Transverse colon (tissue), 4 donors: ENCODE measurements at regions of chr1 and their contacts with region 1.

Region 1: DNA sequence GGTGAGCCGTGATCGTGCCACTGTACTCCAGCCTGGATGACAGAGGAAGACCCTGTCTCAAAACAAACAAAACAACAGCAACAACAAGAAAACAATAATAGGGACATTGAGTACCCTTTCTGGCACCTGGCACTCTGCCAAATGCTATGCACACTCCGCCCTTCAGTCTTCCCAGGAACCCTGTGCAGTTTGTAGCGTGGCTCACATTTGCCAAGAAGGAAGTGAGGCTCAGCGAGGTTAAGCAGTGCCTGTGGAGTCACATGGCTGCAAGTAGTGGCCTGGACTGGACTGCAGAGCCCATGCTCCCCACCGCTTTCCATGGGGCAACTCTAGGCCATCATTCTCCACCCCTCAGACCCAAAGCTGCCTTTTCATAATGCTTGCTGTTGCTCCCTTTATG is 5.3 kb upstream of the EVA1B start:
- DNase-seq: peak; percentile 37
- H3K4me3 ChIP-seq: no peak overlapping the region
- H3K27ac ChIP-seq: no peak overlapping the region
- H3K4me1 ChIP-seq: peaks cover 5 to 17% (median 13%) of the 10 kb centered on the region in 4 donors
- H3K27me3 ChIP-seq: peaks cover 14% of the 10 kb centered on the region
- CTCF ChIP-seq: no peak
- EP300 ChIP-seq: no peak
- POLR2A ChIP-seq: no peak

Region 2: GRCh38 chr1:36300526-36300925 is 28.2 kb before region 1 on chr1:
- in situ Hi-C with region 1: no loop called
- intact Hi-C with region 1: loop called (anchors 1 kb)
- DNase-seq: no peak
- H3K4me3 ChIP-seq: no peak overlapping the region
- H3K27ac ChIP-seq: peak overlapping the region; percentile 64 to 73 (median 67)
- H3K4me1 ChIP-seq: peaks cover 0 to 34% (median 17%) of the 10 kb centered on the region in 4 donors
- H3K27me3 ChIP-seq: no peaks in the 10 kb centered on the region
- CTCF ChIP-seq: no peak
- EP300 ChIP-seq: no peak
- POLR2A ChIP-seq: no peak